ENCODE measurements at regions of chr9 and their contacts with region 1.

Region 1: DNA sequence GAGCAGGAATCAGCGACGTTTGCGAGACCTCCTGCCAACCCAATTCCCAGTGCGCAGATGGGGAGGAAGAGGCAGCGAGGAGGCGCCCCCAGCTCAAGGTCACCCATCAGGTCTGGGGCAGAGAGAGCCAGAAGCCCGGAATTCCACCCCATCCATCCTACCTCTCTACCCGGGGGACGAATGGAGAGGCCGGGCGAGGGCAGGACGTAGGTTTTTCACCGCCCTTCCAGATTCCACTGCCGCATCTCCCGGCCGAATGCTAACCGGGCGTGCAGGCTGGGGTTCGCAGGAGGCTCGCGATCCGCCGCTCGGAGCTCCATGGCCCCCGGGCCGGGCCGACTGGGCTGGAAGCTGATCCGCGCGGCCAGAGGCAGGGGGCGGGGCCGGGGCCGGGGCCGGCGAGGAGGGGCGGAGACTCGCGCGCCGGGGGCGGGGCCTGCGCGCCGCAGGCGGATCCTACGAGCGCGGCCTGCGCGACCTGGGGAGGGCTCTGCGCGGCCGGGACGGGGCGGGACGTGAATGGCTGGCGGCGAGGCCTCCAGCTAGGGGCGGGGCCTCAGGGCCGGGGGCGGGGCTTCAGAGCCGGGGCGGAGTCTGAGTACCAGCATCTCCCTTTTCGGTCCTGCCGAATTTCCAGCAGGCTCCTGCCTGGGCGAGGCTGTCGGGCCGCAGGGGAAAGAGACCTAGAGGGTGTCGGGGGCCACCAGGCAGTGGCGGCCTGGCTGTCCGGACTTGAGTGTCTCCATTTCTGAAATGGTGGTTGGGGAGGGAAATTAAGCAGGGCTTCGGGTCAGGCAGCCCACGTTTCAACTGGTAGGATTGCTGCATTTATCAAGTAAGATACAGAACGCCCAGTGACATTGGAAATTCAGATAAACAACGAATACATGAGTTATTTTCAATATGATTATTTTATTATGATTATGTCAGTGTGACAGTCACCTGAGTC is at the start of gene ST6GALNAC4:
- DNase-seq: peak; percentile 82 to 97 (median 89)
- ATAC-seq: peak; percentile 98
- H3K4me3 ChIP-seq: peak within 1 kb of the TSS; percentile 86
- H3K4me3 Mint-ChIP-seq: peak within 1 kb of the TSS; percentile 76 to 91 (median 86)
- H3K27ac ChIP-seq: peak within 1 kb of the TSS; percentile 81
- H3K27ac Mint-ChIP-seq: peak within 1 kb of the TSS; percentile 69 to 95 (median 87)
- H3K4me1 ChIP-seq: peaks cover 28 to 39% of the 10 kb centered on the region in 2 donors
- H3K4me1 Mint-ChIP-seq: peaks cover 29 to 64% (median 51%) of the 10 kb centered on the region in 7 donors
- H3K27me3 ChIP-seq: no peaks in the 10 kb centered on the region
- H3K27me3 Mint-ChIP-seq: peaks cover 0 to under 1% (median 0%) of the 10 kb centered on the region in 5 donors
- total RNA-seq, gene ST6GALNAC4: 28.0 to 51.0 (median 36.1) TPM

Region 2: DNA sequence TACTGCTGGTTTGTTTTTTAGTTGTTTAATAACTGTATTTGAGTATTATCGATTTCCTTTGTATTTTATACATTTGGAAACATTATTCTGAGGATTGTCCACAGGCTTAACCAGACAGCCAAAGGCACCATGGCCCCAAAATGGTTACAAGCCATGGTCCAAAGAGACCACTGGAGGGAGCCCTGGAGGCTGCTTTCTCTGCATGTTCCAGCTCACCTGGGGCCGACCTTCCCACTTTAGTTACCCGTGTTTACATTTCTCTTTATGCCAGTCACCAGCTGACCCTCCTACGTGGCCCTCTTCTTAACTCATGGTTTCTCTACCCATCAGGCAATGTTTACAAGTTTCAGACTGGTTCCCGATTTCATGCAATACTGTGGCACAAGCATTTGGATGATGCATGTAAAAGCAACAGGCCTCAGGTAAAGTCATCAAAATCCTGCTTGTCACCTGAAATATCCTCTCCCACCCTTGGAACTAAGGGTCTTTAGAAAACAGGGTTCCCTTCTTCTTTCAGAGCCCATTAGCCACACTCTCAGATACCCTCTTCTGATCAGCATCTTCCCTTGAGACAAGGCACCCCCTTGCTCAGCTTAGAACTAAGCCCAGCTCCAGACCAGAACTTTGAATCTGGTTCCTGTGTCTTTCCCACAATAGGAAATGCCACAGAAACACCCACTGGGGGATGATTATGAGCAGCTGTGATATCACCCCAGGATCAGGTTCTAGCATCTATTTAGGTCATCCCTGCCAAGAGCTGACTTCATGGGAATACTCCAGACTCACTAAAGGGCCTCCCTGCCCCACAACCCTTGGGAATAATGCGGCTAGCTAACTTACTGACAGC is 702.3 kb before region 1 on chr9:
- CTCF ChIA-PET with region 1: interaction called, 3 read pairs
- POLR2A ChIA-PET with region 1: no interaction called
- intact Hi-C with region 1: loop called in 1 of 2 experiments (anchors 1 kb)
- DNase-seq: peak in 8 of 9 donors; percentile 37 to 62 (median 48)
- ATAC-seq: peak; percentile 84
- H3K4me3 ChIP-seq: no peak overlapping the region
- H3K4me3 Mint-ChIP-seq: no peak overlapping the region
- H3K27ac ChIP-seq: no peak overlapping the region
- H3K27ac Mint-ChIP-seq: no peak overlapping the region
- H3K4me1 ChIP-seq: no peaks in the 10 kb centered on the region
- H3K4me1 Mint-ChIP-seq: peaks cover 0 to 5% (median 0%) of the 10 kb centered on the region in 7 donors
- H3K27me3 ChIP-seq: no peaks in the 10 kb centered on the region
- H3K27me3 Mint-ChIP-seq: peaks cover 0 to 16% (median 4%) of the 10 kb centered on the region in 5 donors

Region 3: GRCh38 chr9:127568971-127569885 is 347.7 kb before region 1 on chr9:
- CTCF ChIA-PET with region 1: no interaction called
- POLR2A ChIA-PET with region 1: no interaction called
- intact Hi-C with region 1: loop called in 1 of 2 experiments (anchors 5 kb)
- DNase-seq: peak; percentile 20 to 82 (median 60)
- ATAC-seq: peak; percentile 91
- H3K4me3 ChIP-seq: peak overlapping the region; percentile 52
- H3K4me3 Mint-ChIP-seq: peak overlapping the region; percentile 81 to 90 (median 86)
- H3K27ac ChIP-seq: peak overlapping the region; percentile 62
- H3K27ac Mint-ChIP-seq: peak overlapping the region in 8 of 9 donors; percentile 65 to 96 (median 84)
- H3K4me1 ChIP-seq: peaks cover 12 to 18% of the 10 kb centered on the region in 2 donors
- H3K4me1 Mint-ChIP-seq: peaks cover 19 to 56% (median 21%) of the 10 kb centered on the region in 7 donors
- H3K27me3 ChIP-seq: no peaks in the 10 kb centered on the region
- H3K27me3 Mint-ChIP-seq: no peaks in the 10 kb centered on the region

Region 4: GRCh38 chr9:127770905-127771569 is 145.9 kb before region 1 on chr9:
- CTCF ChIA-PET with region 1: interaction called, 4 read pairs
- POLR2A ChIA-PET with region 1: interaction called, 8 read pairs
- intact Hi-C with region 1: loop called in 1 of 2 experiments (anchors 1 kb)
- DNase-seq: peak; percentile 85 to 99 (median 92)
- ATAC-seq: peak; percentile 92
- H3K4me3 ChIP-seq: peak overlapping the region; percentile 71
- H3K4me3 Mint-ChIP-seq: peak overlapping the region; percentile 74 to 92 (median 86)
- H3K27ac ChIP-seq: peak overlapping the region; percentile 90
- H3K27ac Mint-ChIP-seq: peak overlapping the region; percentile 90 to 96 (median 94)
- H3K4me1 ChIP-seq: peaks cover 57 to 59% of the 10 kb centered on the region in 2 donors
- H3K4me1 Mint-ChIP-seq: peaks cover 44 to 82% (median 71%) of the 10 kb centered on the region in 7 donors
- H3K27me3 ChIP-seq: no peaks in the 10 kb centered on the region
- H3K27me3 Mint-ChIP-seq: no peaks in the 10 kb centered on the region

Region 5: GRCh38 chr9:127877566-127877998 is 39.4 kb before region 1 on chr9 and contains the start of gene AK1:
- CTCF ChIA-PET with region 1: interaction called, 12 read pairs
- POLR2A ChIA-PET with region 1: interaction called, 7 read pairs
- intact Hi-C with region 1: loop called in 1 of 2 experiments (anchors 5 kb)
- DNase-seq: no peak
- ATAC-seq: no peak
- H3K4me3 ChIP-seq: no peak within 1 kb of the TSS
- H3K4me3 Mint-ChIP-seq: peak within 1 kb of the TSS in 6 of 10 donors; percentile 34 to 64 (median 45)
- H3K27ac ChIP-seq: no peak within 1 kb of the TSS
- H3K27ac Mint-ChIP-seq: peak within 1 kb of the TSS in 2 of 9 donors; percentile 31 to 50
- H3K4me1 ChIP-seq: no peaks in the 10 kb centered on the region
- H3K4me1 Mint-ChIP-seq: peaks cover 0 to 10% (median 6%) of the 10 kb centered on the region in 7 donors
- H3K27me3 ChIP-seq: peaks cover 0 to 4% of the 10 kb centered on the region in 2 donors
- H3K27me3 Mint-ChIP-seq: peaks cover 0 to 8% (median 0%) of the 10 kb centered on the region in 5 donors
- total RNA-seq, gene AK1: 33.2 to 64.9 (median 51.6) TPM

Region 6: DNA sequence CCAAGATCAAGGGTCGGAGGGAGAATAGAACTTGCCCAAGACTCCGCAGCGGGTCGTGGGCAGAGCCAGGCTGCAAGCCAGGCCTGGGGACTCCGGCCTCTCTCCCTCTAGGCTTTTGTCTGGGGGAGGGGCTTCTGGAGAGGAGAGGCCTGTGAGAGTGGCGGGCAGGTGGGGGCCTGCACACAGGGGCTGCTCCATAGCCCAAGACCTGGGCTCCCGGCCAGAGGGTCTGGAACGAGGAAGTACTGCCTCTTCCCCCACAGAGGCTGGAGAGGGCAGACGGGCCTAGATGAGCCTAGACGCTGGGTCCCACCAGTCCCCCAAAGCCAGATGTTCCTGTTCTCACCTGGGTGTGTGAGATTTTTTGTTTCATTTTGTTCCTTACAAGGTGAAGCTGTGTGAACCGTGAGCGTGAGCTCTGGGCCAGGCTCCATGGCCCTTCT is 12.4 kb before region 1 on chr9:
- CTCF ChIA-PET with region 1: interaction called, 12 read pairs
- POLR2A ChIA-PET with region 1: interaction called, 81 read pairs
- intact Hi-C with region 1: loop called (anchors 1 kb)
- DNase-seq: peak in 1 of 9 donors; percentile 29
- ATAC-seq: peak; percentile 2
- H3K4me3 ChIP-seq: peak overlapping the region; percentile 72
- H3K4me3 Mint-ChIP-seq: peak overlapping the region; percentile 86 to 98 (median 94)
- H3K27ac ChIP-seq: peak overlapping the region; percentile 95
- H3K27ac Mint-ChIP-seq: peak overlapping the region; percentile 96 to 100 (median 99)
- H3K4me1 ChIP-seq: peaks cover 35 to 49% of the 10 kb centered on the region in 2 donors
- H3K4me1 Mint-ChIP-seq: peaks cover 38 to 68% (median 52%) of the 10 kb centered on the region in 7 donors
- H3K27me3 ChIP-seq: no peaks in the 10 kb centered on the region
- H3K27me3 Mint-ChIP-seq: no peaks in the 10 kb centered on the region